Activated CD4-positive, alpha-beta T cell treated with anti-CD3 and anti-CD28 coated beads for 36 hours (primary cell): ENCODE measurements at regions of chr11 and their contacts with region 1.

Region 1: DNA sequence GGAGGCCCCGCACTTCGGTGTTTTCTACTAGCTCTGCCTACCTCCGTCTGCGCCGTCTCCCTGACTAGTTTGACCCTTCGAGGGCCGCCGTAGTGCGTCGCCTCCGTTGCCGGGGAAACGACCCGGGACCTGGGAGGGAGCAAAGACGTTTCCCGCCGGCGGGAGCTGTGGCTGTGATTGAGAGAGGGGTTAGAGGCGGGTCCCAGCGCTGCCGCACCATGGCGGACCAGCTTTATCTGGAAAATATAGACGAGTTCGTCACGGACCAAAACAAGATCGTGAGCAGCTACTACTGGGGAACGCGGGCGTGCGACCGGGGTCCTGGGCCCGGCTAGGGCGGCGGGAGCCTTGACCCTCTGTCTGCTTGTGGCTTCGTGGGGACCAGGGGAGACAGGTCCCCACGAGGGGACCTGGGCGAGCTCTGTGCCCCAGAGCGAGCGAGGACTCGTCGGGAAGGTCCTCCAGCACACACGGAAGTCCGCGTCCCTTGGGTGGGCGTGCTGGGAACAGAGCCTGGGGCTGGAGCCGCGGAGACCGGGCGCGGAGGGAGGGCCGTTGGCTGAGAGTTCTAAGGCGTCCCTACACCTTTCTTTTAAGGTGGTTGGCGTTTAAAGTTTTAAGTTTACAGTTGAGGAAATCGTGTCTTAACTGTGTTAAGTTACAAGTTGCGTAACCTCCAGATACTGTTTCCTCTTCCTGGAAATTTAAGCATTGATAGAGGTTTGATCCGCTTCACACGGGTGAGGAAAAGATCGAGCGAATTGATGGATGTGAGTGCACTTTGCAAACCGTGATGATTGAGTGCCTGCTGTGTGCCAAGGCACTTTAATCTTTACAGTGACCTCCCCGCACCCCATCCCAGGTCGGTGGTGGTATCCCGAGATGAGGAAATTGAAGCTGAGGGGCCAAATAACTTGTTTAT is at the start of gene POLD3:
- DNase-seq: peak; percentile 98
- ATAC-seq: peak; percentile 96
- H3K4me3 Mint-ChIP-seq: peak within 1 kb of the TSS; percentile 93
- H3K27ac Mint-ChIP-seq: peak within 1 kb of the TSS; percentile 96
- H3K4me1 Mint-ChIP-seq: peaks cover 27% of the 10 kb centered on the region
- H3K27me3 Mint-ChIP-seq: no peaks in the 10 kb centered on the region
- total RNA-seq, gene POLD3: 70.0 to 79.8 TPM

Region 2: GRCh38 chr11:74170694-74171629 is 421.7 kb before region 1 on chr11 and contains the starts of genes C2CD3 and PPME1:
- CTCF ChIA-PET with region 1: no interaction called
- POLR2A ChIA-PET with region 1: interaction called, 7 read pairs
- intact Hi-C with region 1: loop called in 1 of 2 experiments (anchors 2 kb)
- DNase-seq: peak; percentile 98
- ATAC-seq: peak; percentile 96
- H3K4me3 Mint-ChIP-seq: no peak within 1 kb of the TSS
- H3K27ac Mint-ChIP-seq: no peak within 1 kb of the TSS
- H3K4me1 Mint-ChIP-seq: peaks cover 16% of the 10 kb centered on the region
- H3K27me3 Mint-ChIP-seq: no peaks in the 10 kb centered on the region
- total RNA-seq, gene C2CD3: 23.9 to 28.0 TPM
- total RNA-seq, gene PPME1: 54.2 to 61.5 TPM

Region 3: DNA sequence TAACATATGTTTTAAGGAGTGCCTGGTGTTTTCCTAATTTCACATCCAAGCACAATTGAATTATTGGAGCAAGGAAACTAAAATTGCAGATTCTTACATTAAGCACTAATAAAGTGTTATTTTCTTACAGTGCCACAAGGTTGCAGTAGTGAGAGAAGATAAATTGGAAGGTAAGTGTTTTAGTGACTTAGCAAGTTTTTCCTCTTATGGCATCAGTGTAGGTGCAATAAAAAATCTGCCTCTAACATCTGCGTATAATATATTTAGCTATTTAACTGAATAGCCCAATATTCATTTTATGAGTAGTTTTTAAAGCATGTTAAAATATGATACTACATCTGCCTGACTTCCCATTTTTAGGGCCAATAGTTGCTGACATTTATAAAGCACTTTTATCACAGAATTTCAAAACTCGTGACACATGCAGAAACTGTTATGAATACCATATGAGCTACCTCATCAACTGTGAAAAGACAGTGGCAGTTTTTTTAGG is 18.7 kb after region 1 on chr11:
- CTCF ChIA-PET with region 1: no interaction called
- POLR2A ChIA-PET with region 1: no interaction called
- intact Hi-C with region 1: no loop called
- DNase-seq: no peak
- ATAC-seq: no peak
- H3K4me3 Mint-ChIP-seq: no peak overlapping the region
- H3K27ac Mint-ChIP-seq: no peak overlapping the region
- H3K4me1 Mint-ChIP-seq: peaks cover 2% of the 10 kb centered on the region
- H3K27me3 Mint-ChIP-seq: no peaks in the 10 kb centered on the region